PC-3 (cell line): ENCODE measurements at regions of chr1 and their contacts with region 1.

Region 1: DNA sequence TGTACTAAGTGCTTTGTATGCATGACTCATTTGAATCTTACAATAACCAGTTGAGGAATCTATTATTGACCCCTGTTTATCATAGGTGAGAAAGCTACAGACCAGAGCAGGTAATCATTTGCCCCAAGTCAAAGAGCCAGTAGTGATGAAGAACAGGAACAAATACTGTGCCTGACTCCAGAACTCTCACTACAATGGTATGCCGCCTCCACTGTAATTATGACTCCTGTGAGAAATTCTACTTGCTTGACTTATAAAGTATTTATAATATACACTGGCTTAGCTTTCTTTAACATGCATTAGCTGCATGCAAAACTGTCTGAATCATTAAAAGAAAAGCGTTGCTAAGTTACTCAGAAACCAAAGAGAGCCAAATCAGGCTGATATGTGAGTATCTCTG is 92.6 kb downstream of the ZNF281 start:
- DNase-seq: peak; percentile 78
- ATAC-seq: peak; percentile 55
- H3K4me3 ChIP-seq: no peak overlapping the region
- H3K27ac ChIP-seq: no peak overlapping the region
- H3K4me1 ChIP-seq: peaks cover 21% of the 10 kb centered on the region
- H3K27me3 ChIP-seq: no peaks in the 10 kb centered on the region
- CTCF ChIP-seq: no peak

Region 2: GRCh38 chr1:200302192-200302920 is 14.9 kb before region 1 on chr1:
- CTCF ChIA-PET with region 1: no interaction called
- POLR2A ChIA-PET with region 1: no interaction called
- intact Hi-C with region 1: no loop called
- DNase-seq: peak; percentile 67
- ATAC-seq: peak; percentile 71
- H3K4me3 ChIP-seq: peak overlapping the region; percentile 74
- H3K27ac ChIP-seq: no peak overlapping the region
- H3K4me1 ChIP-seq: peaks cover 8% of the 10 kb centered on the region
- H3K27me3 ChIP-seq: no peaks in the 10 kb centered on the region
- CTCF ChIP-seq: peak; percentile 61; the same call in 1 of the 2 replicates

Region 3: GRCh38 chr1:200336111-200336845 is 19.0 kb after region 1 on chr1:
- CTCF ChIA-PET with region 1: no interaction called
- POLR2A ChIA-PET with region 1: no interaction called
- intact Hi-C with region 1: loop called (anchors 2 kb)
- DNase-seq: peak; percentile 98
- ATAC-seq: peak; percentile 82
- H3K4me3 ChIP-seq: no peak overlapping the region; the same call in 1 of the 2 replicates
- H3K27ac ChIP-seq: peak overlapping the region; percentile 39
- H3K4me1 ChIP-seq: peaks cover 34% of the 10 kb centered on the region
- H3K27me3 ChIP-seq: no peaks in the 10 kb centered on the region
- CTCF ChIP-seq: no peak

Region 4: GRCh38 chr1:201421041-201421440 is 1103.8 kb after region 1 on chr1:
- CTCF ChIA-PET with region 1: no interaction called
- POLR2A ChIA-PET with region 1: interaction called, 16 read pairs
- intact Hi-C with region 1: no loop called
- DNase-seq: no peak
- ATAC-seq: no peak
- H3K4me3 ChIP-seq: no peak overlapping the region
- H3K27ac ChIP-seq: no peak overlapping the region
- H3K4me1 ChIP-seq: no peaks in the 10 kb centered on the region
- H3K27me3 ChIP-seq: no peaks in the 10 kb centered on the region
- CTCF ChIP-seq: no peak